K562 (cell line): ENCODE measurements at regions of chr3 and their contacts with region 1.

Region 1: GRCh38 chr3:195909644-195910508 is 1.5 kb upstream of the TNK2 start:
- DNase-seq: peak; percentile 94 to 100 (median 100)
- ATAC-seq: peak; percentile 88
- H3K4me3 ChIP-seq: peak overlapping the region; percentile 40
- H3K27ac ChIP-seq: peak overlapping the region; percentile 74
- H3K4me1 ChIP-seq: peaks cover 43 to 48% of the 10 kb centered on the region in 2 experiments
- H3K27me3 ChIP-seq: no peaks in the 10 kb centered on the region
- CTCF ChIP-seq: no peak
- EP300 ChIP-seq: no peak
- POLR2A ChIP-seq: peak; percentile 81
- RAD21 ChIP-seq: no peak

Region 2: DNA sequence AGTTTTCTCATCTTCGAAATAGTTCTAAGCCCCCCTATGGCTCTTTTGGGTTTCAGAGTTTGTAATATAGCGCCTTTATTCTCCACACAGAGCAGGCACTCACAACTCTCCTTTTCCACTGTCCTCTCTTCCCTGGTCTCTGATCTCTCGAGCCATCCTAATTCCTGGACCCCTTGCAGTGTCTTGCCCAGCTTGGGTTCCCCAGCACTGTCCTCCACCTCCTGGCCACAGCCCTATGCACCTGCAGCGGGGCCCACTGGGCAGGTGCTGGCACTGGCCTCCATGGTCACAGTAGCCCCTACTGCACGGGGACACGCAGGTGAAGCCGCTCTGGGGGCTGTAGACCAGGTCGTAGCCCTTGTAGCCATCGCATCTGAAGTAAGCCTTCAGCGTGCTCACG is 161.2 kb before region 1 on chr3:
- CTCF ChIA-PET with region 1: no interaction called
- POLR2A ChIA-PET with region 1: no interaction called
- in situ Hi-C with region 1: no loop called
- intact Hi-C with region 1: loop called (anchors 10 kb)
- DNase-seq: no peak
- ATAC-seq: peak; percentile 5; the same call in 2 of the 3 replicates
- H3K4me3 ChIP-seq: no peak overlapping the region
- H3K27ac ChIP-seq: no peak overlapping the region
- H3K4me1 ChIP-seq: peaks cover 0 to 28% of the 10 kb centered on the region in 2 experiments; a peak in 3 of 5 replicates
- H3K27me3 ChIP-seq: peaks cover 12 to 43% of the 10 kb centered on the region in 2 experiments
- CTCF ChIP-seq: no peak
- EP300 ChIP-seq: no peak
- POLR2A ChIP-seq: no peak
- RAD21 ChIP-seq: no peak

Region 3: GRCh38 chr3:195863121-195864006 is 46.5 kb before region 1 on chr3:
- CTCF ChIA-PET with region 1: interaction called, 22 read pairs
- POLR2A ChIA-PET with region 1: no interaction called
- in situ Hi-C with region 1: no loop called
- intact Hi-C with region 1: loop called (anchors 1 kb)
- DNase-seq: peak; percentile 85 to 91 (median 86)
- ATAC-seq: peak; percentile 99
- H3K4me3 ChIP-seq: no peak overlapping the region
- H3K27ac ChIP-seq: no peak overlapping the region
- H3K4me1 ChIP-seq: peaks cover 7 to 35% of the 10 kb centered on the region in 2 experiments; a peak in 3 of 5 replicates
- H3K27me3 ChIP-seq: no peaks in the 10 kb centered on the region
- CTCF ChIP-seq: peak; percentile 96 to 98 (median 97)
- EP300 ChIP-seq: no peak
- POLR2A ChIP-seq: no peak
- RAD21 ChIP-seq: peak; percentile 94 to 98